Dendritic cell treated with granulocyte-macrophage colony-stimulating factor and Interleukin-4, amounts not matched to agents 40 ng/mL and 50 ng/mL, for 4 days (primary cell): ENCODE measurements at regions of chr10 and their contacts with region 1.

Region 1: GRCh38 chr10:19788075-19788686 is 28.1 kb upstream of the PLXDC2 start:
- H3K4me3 Mint-ChIP-seq: no peak overlapping the region
- H3K27ac Mint-ChIP-seq: no peak overlapping the region
- H3K4me1 Mint-ChIP-seq: peaks cover 24% of the 10 kb centered on the region
- H3K27me3 Mint-ChIP-seq: no peaks in the 10 kb centered on the region

Region 2: GRCh38 chr10:19290770-19291169 is 497.4 kb before region 1 on chr10:
- intact Hi-C with region 1: no loop called
- H3K4me3 Mint-ChIP-seq: no peak overlapping the region
- H3K27ac Mint-ChIP-seq: no peak overlapping the region
- H3K4me1 Mint-ChIP-seq: no peaks in the 10 kb centered on the region
- H3K27me3 Mint-ChIP-seq: no peaks in the 10 kb centered on the region

Region 3: GRCh38 chr10:19412531-19412930 is 375.6 kb before region 1 on chr10:
- intact Hi-C with region 1: loop called (anchors 1 kb)
- H3K4me3 Mint-ChIP-seq: no peak overlapping the region
- H3K27ac Mint-ChIP-seq: no peak overlapping the region
- H3K4me1 Mint-ChIP-seq: no peaks in the 10 kb centered on the region
- H3K27me3 Mint-ChIP-seq: no peaks in the 10 kb centered on the region

Region 4: GRCh38 chr10:19451937-19452336 is 336.2 kb before region 1 on chr10:
- intact Hi-C with region 1: no loop called
- H3K4me3 Mint-ChIP-seq: no peak overlapping the region
- H3K27ac Mint-ChIP-seq: no peak overlapping the region
- H3K4me1 Mint-ChIP-seq: no peaks in the 10 kb centered on the region
- H3K27me3 Mint-ChIP-seq: no peaks in the 10 kb centered on the region

Region 5: DNA sequence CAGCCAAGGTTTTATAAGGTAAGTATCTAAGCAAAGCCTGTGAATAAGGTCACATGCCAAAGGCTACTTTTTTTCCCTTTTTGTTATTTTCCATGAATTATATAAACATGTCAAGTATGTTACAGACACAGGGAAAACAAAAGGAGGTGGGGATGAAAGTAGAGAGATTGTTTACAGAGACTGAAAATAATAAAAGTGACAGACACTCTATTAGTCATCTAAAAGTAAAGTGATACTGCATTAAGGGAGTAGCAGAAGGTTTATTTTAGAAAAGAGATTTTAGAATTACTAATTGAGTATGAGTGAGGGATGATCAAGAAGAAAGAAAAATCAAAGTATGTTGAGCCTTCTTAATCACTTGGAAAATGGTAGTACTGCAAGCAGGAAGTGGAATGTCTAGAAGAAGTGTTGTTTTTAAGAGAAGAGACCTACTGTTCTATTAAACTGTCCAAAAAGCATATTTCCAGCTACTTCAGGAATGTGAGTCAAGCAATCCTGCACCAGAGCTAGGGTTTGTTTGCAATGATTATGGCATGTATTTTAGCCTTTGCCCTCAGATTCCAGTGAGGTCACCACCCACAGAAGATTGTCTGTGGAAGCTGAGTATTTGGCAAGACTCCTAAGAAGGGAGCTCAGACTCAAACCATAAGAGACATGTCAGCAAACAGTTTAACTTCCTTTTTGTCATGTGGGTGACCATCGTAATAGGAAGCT is 149.8 kb before region 1 on chr10:
- intact Hi-C with region 1: loop called (anchors 5 kb)
- H3K4me3 Mint-ChIP-seq: peak overlapping the region; percentile 70
- H3K27ac Mint-ChIP-seq: peak overlapping the region; percentile 94
- H3K4me1 Mint-ChIP-seq: peaks cover 23% of the 10 kb centered on the region
- H3K27me3 Mint-ChIP-seq: no peaks in the 10 kb centered on the region

Region 6: DNA sequence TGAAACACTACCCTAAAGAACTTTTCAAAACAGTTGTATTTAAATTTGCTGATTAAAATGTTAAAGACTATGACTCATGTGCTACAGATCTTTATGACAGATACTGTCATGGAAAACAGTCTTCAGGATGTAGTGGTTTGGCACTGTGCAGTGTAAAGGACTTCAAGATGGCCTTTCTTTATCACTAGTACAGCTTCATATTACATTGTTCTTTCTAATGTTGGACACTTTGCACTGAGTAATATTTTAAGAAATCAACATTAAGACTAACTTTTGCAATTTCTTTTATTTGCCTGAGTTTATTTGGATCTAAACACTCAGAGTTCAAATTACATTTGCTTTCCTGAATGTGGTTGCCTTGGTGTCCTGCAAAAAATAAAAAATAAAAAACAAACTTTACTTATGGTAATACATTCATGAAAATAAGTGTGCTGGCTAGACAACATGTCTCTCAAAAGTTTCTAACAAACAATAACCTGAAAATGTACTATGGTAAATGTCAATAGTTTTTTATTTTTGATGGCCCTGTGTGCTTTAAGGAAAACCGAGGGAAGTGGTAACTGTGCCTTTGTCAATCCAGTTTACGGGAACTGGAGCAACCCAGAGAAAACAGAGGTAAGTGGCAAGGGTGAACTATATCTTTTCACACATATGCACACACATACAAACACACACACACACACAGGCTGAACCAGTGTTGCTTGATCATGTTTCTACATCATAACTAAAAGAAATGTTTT is 57.8 kb before region 1 on chr10:
- intact Hi-C with region 1: loop called (anchors 5 kb)
- H3K4me3 Mint-ChIP-seq: no peak overlapping the region
- H3K27ac Mint-ChIP-seq: no peak overlapping the region
- H3K4me1 Mint-ChIP-seq: peaks cover 8% of the 10 kb centered on the region
- H3K27me3 Mint-ChIP-seq: no peaks in the 10 kb centered on the region